Activated CD4-positive, alpha-beta T cell treated with anti-CD3 and anti-CD28 coated beads, Interleukin-2, amount 10 ng/mL, durations not matched to agents 7 days and 5 days (primary cell): ENCODE measurements at regions of chr3 and their contacts with region 1.

Region 1: GRCh38 chr3:48556793-48557626 is at the start of gene PFKFB4:
- DNase-seq: peak; percentile 100
- H3K4me3 Mint-ChIP-seq: peak within 1 kb of the TSS; percentile 78
- H3K27ac Mint-ChIP-seq: peak within 1 kb of the TSS; percentile 88
- H3K4me1 Mint-ChIP-seq: peaks cover 64% of the 10 kb centered on the region
- H3K27me3 Mint-ChIP-seq: no peaks in the 10 kb centered on the region
- total RNA-seq, gene PFKFB4: 21.6 to 24.9 TPM

Region 2: GRCh38 chr3:48400824-48401433 is 156.1 kb before region 1 on chr3:
- CTCF ChIA-PET with region 1: interaction called, 19 read pairs
- POLR2A ChIA-PET with region 1: no interaction called
- DNase-seq: peak; percentile 77
- H3K4me3 Mint-ChIP-seq: no peak overlapping the region
- H3K27ac Mint-ChIP-seq: no peak overlapping the region
- H3K4me1 Mint-ChIP-seq: no peaks in the 10 kb centered on the region
- H3K27me3 Mint-ChIP-seq: no peaks in the 10 kb centered on the region

Region 3: DNA sequence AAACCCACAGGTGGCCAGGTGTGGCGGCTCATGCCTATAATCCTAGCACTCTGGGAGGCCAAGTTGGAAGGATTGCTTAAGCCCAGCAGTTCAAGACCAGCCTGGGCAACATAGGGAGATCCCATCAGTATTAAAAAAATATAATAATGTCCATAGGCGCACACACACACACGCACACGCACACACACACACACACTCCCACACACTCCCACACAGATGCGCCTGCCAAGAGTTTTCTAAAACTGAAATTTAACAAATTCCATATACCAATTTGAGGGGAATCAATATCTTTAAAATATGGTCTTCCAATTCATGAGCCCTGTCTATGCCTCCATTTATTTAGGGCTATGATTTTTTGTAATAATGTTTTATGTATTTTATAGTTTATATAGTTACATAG is 70.1 kb before region 1 on chr3:
- CTCF ChIA-PET with region 1: no interaction called
- POLR2A ChIA-PET with region 1: no interaction called
- DNase-seq: no peak
- H3K4me3 Mint-ChIP-seq: no peak overlapping the region
- H3K27ac Mint-ChIP-seq: no peak overlapping the region
- H3K4me1 Mint-ChIP-seq: no peaks in the 10 kb centered on the region
- H3K27me3 Mint-ChIP-seq: no peaks in the 10 kb centered on the region

Region 4: DNA sequence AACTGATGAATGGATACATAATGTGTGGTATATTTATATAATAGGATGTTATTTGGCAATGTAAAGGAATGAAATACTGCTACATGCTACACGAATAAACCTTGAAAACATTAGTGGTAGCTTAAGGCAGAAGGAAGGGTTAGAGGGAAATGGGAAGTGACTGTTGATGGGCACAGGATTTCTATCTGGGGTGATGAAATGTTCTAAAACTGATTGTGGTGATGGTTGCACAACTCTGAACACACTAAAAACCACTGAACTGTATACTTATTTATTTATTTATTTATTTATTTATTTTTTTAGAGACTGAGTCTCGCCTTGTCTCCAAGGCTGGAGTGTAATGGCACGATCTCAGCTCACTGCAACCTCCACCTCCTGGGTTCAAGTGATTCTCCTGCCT is 28.3 kb before region 1 on chr3:
- CTCF ChIA-PET with region 1: no interaction called
- POLR2A ChIA-PET with region 1: no interaction called
- DNase-seq: no peak
- H3K4me3 Mint-ChIP-seq: no peak overlapping the region
- H3K27ac Mint-ChIP-seq: no peak overlapping the region
- H3K4me1 Mint-ChIP-seq: peaks cover 9% of the 10 kb centered on the region
- H3K27me3 Mint-ChIP-seq: no peaks in the 10 kb centered on the region

Region 5: DNA sequence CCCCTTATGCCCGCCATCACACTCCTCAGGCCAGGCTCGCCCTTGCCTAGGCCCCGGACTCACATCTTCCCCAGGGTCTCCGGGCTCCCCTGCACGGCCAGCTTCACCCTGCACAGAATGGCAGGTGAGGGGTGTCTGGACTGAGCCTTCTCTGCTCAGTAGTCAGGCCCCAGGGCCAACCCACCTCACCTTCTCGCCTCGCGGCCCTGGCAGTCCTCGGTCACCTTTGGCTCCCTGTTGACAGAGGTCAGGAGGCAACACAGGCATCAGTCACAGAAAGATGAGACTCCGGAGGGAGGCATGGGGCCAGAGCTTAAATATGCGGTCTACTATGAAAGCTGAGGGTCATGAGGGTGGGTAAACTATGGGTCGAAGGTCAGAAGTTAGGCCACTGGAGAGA is 14.9 kb after region 1 on chr3:
- CTCF ChIA-PET with region 1: interaction called, 13 read pairs
- POLR2A ChIA-PET with region 1: no interaction called
- DNase-seq: no peak
- H3K4me3 Mint-ChIP-seq: no peak overlapping the region
- H3K27ac Mint-ChIP-seq: no peak overlapping the region
- H3K4me1 Mint-ChIP-seq: no peaks in the 10 kb centered on the region
- H3K27me3 Mint-ChIP-seq: no peaks in the 10 kb centered on the region

Region 6: GRCh38 chr3:48663415-48664312 is 106.7 kb after region 1 on chr3:
- CTCF ChIA-PET with region 1: interaction called, 3 read pairs
- POLR2A ChIA-PET with region 1: interaction called, 10 read pairs
- DNase-seq: peak; percentile 92
- H3K4me3 Mint-ChIP-seq: peak overlapping the region; percentile 78
- H3K27ac Mint-ChIP-seq: peak overlapping the region; percentile 82
- H3K4me1 Mint-ChIP-seq: peaks cover 22% of the 10 kb centered on the region
- H3K27me3 Mint-ChIP-seq: peaks cover 10% of the 10 kb centered on the region